CD8-positive, alpha-beta T cell (primary cell): ENCODE measurements at regions of chr5 and their contacts with region 1.

Region 1: DNA sequence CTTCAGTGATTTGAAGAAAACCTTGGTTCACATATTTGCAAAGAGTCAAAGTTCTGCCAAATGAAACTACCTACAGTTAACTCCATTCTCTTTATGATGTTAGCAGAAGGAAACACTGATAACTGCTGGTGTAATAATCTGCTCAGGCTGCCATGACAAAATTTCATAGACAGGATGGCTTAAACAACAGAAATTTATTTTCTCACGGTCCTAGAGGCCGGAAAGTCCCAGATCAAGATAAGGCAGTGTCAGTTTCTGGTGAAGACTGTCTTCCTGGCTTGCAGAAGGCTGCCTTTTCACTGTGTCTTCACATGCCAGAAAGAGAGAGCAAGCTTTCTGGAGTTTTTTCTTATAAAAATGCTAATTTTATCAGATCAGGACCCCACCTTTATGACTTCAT is 102.4 kb upstream of the PARP8 start:
- DNase-seq: peak in 4 of 9 experiments; percentile 10 to 76 (median 51)
- ATAC-seq: peak; percentile 88
- H3K4me3 ChIP-seq: no peak overlapping the region
- H3K4me3 Mint-ChIP-seq: peak overlapping the region; percentile 31
- H3K27ac ChIP-seq: peak overlapping the region in 1 of 2 experiments; percentile 33
- H3K27ac Mint-ChIP-seq: peak overlapping the region; percentile 60
- H3K4me1 ChIP-seq: peaks cover 27% of the 10 kb centered on the region
- H3K4me1 Mint-ChIP-seq: peaks cover 43% of the 10 kb centered on the region
- H3K27me3 ChIP-seq: no peaks in the 10 kb centered on the region
- H3K27me3 Mint-ChIP-seq: no peaks in the 10 kb centered on the region
- CTCF ChIP-seq: no peak

Region 2: GRCh38 chr5:50343715-50344114 is 220.4 kb before region 1 on chr5:
- CTCF ChIA-PET with region 1: no interaction called
- POLR2A ChIA-PET with region 1: no interaction called
- intact Hi-C with region 1: no loop called
- DNase-seq: no peak
- ATAC-seq: no peak
- H3K4me3 ChIP-seq: no peak overlapping the region
- H3K4me3 Mint-ChIP-seq: no peak overlapping the region
- H3K27ac ChIP-seq: no peak overlapping the region
- H3K27ac Mint-ChIP-seq: no peak overlapping the region
- H3K4me1 ChIP-seq: no peaks in the 10 kb centered on the region
- H3K4me1 Mint-ChIP-seq: no peaks in the 10 kb centered on the region
- H3K27me3 ChIP-seq: no peaks in the 10 kb centered on the region
- H3K27me3 Mint-ChIP-seq: no peaks in the 10 kb centered on the region
- CTCF ChIP-seq: no peak

Region 3: GRCh38 chr5:50440651-50441492 is 123.2 kb before region 1 on chr5 and contains the start of gene EMB:
- CTCF ChIA-PET with region 1: interaction called, 3 read pairs
- POLR2A ChIA-PET with region 1: no interaction called
- intact Hi-C with region 1: loop called in 1 of 2 experiments (anchors 1 kb)
- DNase-seq: peak; percentile 64 to 92 (median 83)
- ATAC-seq: peak; percentile 67
- H3K4me3 ChIP-seq: peak within 1 kb of the TSS; percentile 66 to 75
- H3K4me3 Mint-ChIP-seq: peak within 1 kb of the TSS; percentile 96
- H3K27ac ChIP-seq: peak within 1 kb of the TSS; percentile 86 to 87
- H3K27ac Mint-ChIP-seq: peak within 1 kb of the TSS; percentile 97
- H3K4me1 ChIP-seq: peaks cover 51% of the 10 kb centered on the region
- H3K4me1 Mint-ChIP-seq: peaks cover 69% of the 10 kb centered on the region
- H3K27me3 ChIP-seq: no peaks in the 10 kb centered on the region
- H3K27me3 Mint-ChIP-seq: no peaks in the 10 kb centered on the region
- CTCF ChIP-seq: peak; percentile 33
- total RNA-seq, gene EMB: 122 to 145 TPM

Region 4: GRCh38 chr5:50535393-50535792 is 28.7 kb before region 1 on chr5:
- CTCF ChIA-PET with region 1: no interaction called
- POLR2A ChIA-PET with region 1: no interaction called
- intact Hi-C with region 1: no loop called
- DNase-seq: no peak
- ATAC-seq: no peak
- H3K4me3 ChIP-seq: no peak overlapping the region
- H3K4me3 Mint-ChIP-seq: no peak overlapping the region
- H3K27ac ChIP-seq: no peak overlapping the region
- H3K27ac Mint-ChIP-seq: no peak overlapping the region
- H3K4me1 ChIP-seq: no peaks in the 10 kb centered on the region
- H3K4me1 Mint-ChIP-seq: peaks cover 7% of the 10 kb centered on the region
- H3K27me3 ChIP-seq: no peaks in the 10 kb centered on the region
- H3K27me3 Mint-ChIP-seq: no peaks in the 10 kb centered on the region
- CTCF ChIP-seq: no peak

Region 5: GRCh38 chr5:50550267-50550666 is 13.8 kb before region 1 on chr5:
- CTCF ChIA-PET with region 1: no interaction called
- POLR2A ChIA-PET with region 1: no interaction called
- intact Hi-C with region 1: loop called in 1 of 2 experiments (anchors 1 kb)
- DNase-seq: no peak
- ATAC-seq: no peak
- H3K4me3 ChIP-seq: no peak overlapping the region
- H3K4me3 Mint-ChIP-seq: no peak overlapping the region
- H3K27ac ChIP-seq: no peak overlapping the region
- H3K27ac Mint-ChIP-seq: no peak overlapping the region
- H3K4me1 ChIP-seq: peaks cover 4% of the 10 kb centered on the region
- H3K4me1 Mint-ChIP-seq: peaks cover 43% of the 10 kb centered on the region
- H3K27me3 ChIP-seq: no peaks in the 10 kb centered on the region
- H3K27me3 Mint-ChIP-seq: no peaks in the 10 kb centered on the region
- CTCF ChIP-seq: no peak

Region 6: GRCh38 chr5:50595199-50595598 is 31.1 kb after region 1 on chr5:
- CTCF ChIA-PET with region 1: no interaction called
- POLR2A ChIA-PET with region 1: no interaction called
- intact Hi-C with region 1: loop called in 1 of 2 experiments (anchors 5 kb)
- DNase-seq: no peak
- ATAC-seq: no peak
- H3K4me3 ChIP-seq: no peak overlapping the region
- H3K4me3 Mint-ChIP-seq: no peak overlapping the region
- H3K27ac ChIP-seq: no peak overlapping the region
- H3K27ac Mint-ChIP-seq: peak overlapping the region; percentile 12
- H3K4me1 ChIP-seq: peaks cover 38% of the 10 kb centered on the region
- H3K4me1 Mint-ChIP-seq: peaks cover 48% of the 10 kb centered on the region
- H3K27me3 ChIP-seq: no peaks in the 10 kb centered on the region
- H3K27me3 Mint-ChIP-seq: no peaks in the 10 kb centered on the region
- CTCF ChIP-seq: no peak

Region 7: DNA sequence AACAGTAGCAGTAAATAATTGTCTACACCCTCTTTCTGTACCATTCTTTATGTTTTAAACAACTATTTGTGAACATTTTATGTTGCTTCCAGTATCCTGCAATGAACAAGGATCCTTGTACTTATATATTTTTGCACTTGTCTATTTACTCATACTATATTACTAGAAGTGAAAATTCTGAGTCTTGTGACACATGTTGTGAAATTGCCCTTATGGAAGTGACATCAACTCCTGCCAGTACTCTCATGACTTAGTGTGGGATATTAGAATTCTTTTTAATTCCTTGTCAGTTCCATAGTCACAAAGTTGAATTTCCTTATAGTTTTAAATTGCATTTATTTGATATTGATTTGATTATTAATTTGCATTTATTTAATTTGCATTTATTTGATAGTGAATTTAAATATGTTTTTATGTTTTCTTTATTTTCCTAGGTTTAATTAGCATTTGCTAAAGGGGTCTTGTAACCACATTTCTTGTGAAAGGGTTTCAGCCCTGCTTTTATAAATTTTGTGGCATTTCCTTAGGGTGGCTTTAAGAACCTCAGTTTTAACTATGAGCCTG is 130.0 kb after region 1 on chr5:
- CTCF ChIA-PET with region 1: no interaction called
- POLR2A ChIA-PET with region 1: no interaction called
- intact Hi-C with region 1: no loop called
- DNase-seq: no peak
- ATAC-seq: no peak
- H3K4me3 ChIP-seq: no peak overlapping the region
- H3K4me3 Mint-ChIP-seq: no peak overlapping the region
- H3K27ac ChIP-seq: no peak overlapping the region
- H3K27ac Mint-ChIP-seq: peak overlapping the region; percentile 46
- H3K4me1 ChIP-seq: peaks cover 28% of the 10 kb centered on the region
- H3K4me1 Mint-ChIP-seq: peaks cover 40% of the 10 kb centered on the region
- H3K27me3 ChIP-seq: no peaks in the 10 kb centered on the region
- H3K27me3 Mint-ChIP-seq: no peaks in the 10 kb centered on the region
- CTCF ChIP-seq: no peak

Region 8: GRCh38 chr5:50751064-50751657 is 187.1 kb after region 1 on chr5:
- CTCF ChIA-PET with region 1: no interaction called
- POLR2A ChIA-PET with region 1: no interaction called
- intact Hi-C with region 1: loop called in 1 of 2 experiments (anchors 5 kb)
- DNase-seq: peak in 7 of 9 experiments; percentile 11 to 86 (median 45)
- ATAC-seq: peak; percentile 88
- H3K4me3 ChIP-seq: no peak overlapping the region
- H3K4me3 Mint-ChIP-seq: peak overlapping the region; percentile 40
- H3K27ac ChIP-seq: peak overlapping the region in 1 of 2 experiments; percentile 57
- H3K27ac Mint-ChIP-seq: peak overlapping the region; percentile 73
- H3K4me1 ChIP-seq: peaks cover 44% of the 10 kb centered on the region
- H3K4me1 Mint-ChIP-seq: peaks cover 60% of the 10 kb centered on the region
- H3K27me3 ChIP-seq: no peaks in the 10 kb centered on the region
- H3K27me3 Mint-ChIP-seq: no peaks in the 10 kb centered on the region
- CTCF ChIP-seq: peak; percentile 90

Region 9: GRCh38 chr5:51495672-51496071 is 931.6 kb after region 1 on chr5:
- CTCF ChIA-PET with region 1: no interaction called
- POLR2A ChIA-PET with region 1: no interaction called
- intact Hi-C with region 1: no loop called
- DNase-seq: no peak
- ATAC-seq: no peak
- H3K4me3 ChIP-seq: no peak overlapping the region
- H3K4me3 Mint-ChIP-seq: no peak overlapping the region
- H3K27ac ChIP-seq: no peak overlapping the region
- H3K27ac Mint-ChIP-seq: no peak overlapping the region
- H3K4me1 ChIP-seq: no peaks in the 10 kb centered on the region
- H3K4me1 Mint-ChIP-seq: no peaks in the 10 kb centered on the region
- H3K27me3 ChIP-seq: no peaks in the 10 kb centered on the region
- H3K27me3 Mint-ChIP-seq: no peaks in the 10 kb centered on the region
- CTCF ChIP-seq: no peak